Adrenal gland (tissue), 19 donors: ENCODE measurements at regions of chr2 and their contacts with region 1.

Region 1: DNA sequence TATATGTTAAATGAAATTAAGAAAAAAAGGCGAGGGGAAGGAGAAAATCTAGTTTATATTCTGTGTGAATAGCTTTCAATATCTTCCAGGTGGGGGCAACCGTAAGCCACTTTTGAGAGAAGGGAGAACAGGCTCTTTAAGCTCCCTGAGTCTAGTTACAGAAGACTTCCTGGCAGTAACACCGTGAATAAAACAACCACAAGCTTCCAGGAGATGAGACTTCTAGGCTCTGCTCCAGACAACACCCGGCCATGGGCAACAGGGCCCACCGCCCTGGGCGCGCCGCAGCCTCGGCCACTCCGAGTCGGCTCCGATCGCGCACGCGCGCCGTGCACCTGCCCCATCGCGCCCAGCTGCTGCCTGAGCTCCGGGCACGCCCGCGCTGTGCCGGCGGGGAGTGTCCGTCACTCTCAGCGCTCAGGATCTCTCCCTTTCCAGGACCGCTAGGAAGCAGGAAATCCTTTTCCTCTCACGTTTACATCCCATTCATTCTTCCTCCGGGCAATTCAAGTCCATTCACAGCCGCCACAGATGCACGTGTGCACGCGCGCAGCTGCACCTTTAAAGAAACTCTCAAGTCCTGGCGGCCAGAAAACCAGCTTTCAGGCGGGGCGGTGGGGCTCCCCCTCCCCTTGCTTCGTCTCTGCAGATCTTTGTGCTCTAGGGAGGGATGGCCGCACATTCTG is 19.4 kb upstream of the PAX3 start:
- DNase-seq: peak; percentile 53 to 76 (median 62)
- H3K4me3 ChIP-seq: peak overlapping the region in 2 of 4 donors; percentile 2 to 64
- H3K27ac ChIP-seq: peak overlapping the region in 1 of 5 donors; percentile 4
- H3K4me1 ChIP-seq: peaks cover 0 to 9% of the 10 kb centered on the region in 2 donors
- H3K27me3 ChIP-seq: peaks cover 25% of the 10 kb centered on the region
- CTCF ChIP-seq: peak in 5 of 6 experiments; percentile 44 to 63 (median 59)
- POLR2A ChIP-seq: no peak

Region 2: DNA sequence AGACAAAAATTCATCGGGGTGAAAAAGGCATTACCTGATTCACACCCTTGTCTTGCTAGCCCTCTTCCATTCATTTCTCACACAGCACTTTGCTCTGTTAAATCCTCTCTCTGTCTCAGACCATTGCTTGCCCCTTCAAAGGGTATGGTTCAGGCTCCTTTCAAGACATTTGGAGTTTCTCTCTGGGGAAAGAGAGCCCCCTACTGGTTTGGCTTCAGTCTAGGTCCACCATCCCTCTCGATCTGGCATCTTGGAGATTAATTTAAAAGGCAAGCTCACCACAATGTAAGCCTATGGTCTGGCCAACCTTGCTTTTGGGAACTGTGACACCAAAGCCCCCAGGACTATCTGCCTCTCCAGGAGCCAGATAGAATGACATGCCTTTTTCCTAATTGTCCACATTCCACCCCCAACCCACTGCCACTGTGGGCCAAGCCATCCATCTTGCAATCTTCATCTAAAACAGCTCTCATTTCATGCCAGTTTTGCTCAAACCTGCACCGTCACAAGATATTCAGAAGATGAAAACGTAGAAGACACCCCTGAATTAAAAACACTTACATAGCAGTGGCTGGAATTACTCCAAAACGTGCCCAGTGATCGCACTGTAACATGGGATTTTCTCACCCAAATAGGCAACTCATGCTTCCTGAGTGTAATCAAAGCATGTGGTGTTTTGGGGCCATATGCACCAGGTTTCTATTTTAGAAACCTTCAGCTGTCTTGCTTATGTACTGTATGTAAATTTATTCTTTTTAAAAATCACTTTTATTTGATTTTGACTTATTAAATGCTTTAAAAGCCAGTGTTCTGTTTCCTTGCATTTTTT is 243.9 kb after region 1 on chr2:
- intact Hi-C with region 1: loop called (anchors 5 kb)
- DNase-seq: peak; percentile 39 to 73 (median 61)
- H3K4me3 ChIP-seq: no peak overlapping the region
- H3K27ac ChIP-seq: no peak overlapping the region
- H3K4me1 ChIP-seq: no peaks in the 10 kb centered on the region
- H3K27me3 ChIP-seq: no peaks in the 10 kb centered on the region
- CTCF ChIP-seq: peak; percentile 53 to 78 (median 75)
- POLR2A ChIP-seq: no peak

Region 3: GRCh38 chr2:222613715-222614331 is 295.7 kb after region 1 on chr2:
- intact Hi-C with region 1: loop called in 1 of 2 experiments (anchors 5 kb)
- DNase-seq: peak in 2 of 7 donors; percentile 18
- H3K4me3 ChIP-seq: no peak overlapping the region
- H3K27ac ChIP-seq: no peak overlapping the region
- H3K4me1 ChIP-seq: no peaks in the 10 kb centered on the region
- H3K27me3 ChIP-seq: no peaks in the 10 kb centered on the region
- CTCF ChIP-seq: peak; percentile 64 to 79 (median 74)
- POLR2A ChIP-seq: no peak